ENCODE measurements at regions of chr9 and their contacts with region 1.

Region 1: DNA sequence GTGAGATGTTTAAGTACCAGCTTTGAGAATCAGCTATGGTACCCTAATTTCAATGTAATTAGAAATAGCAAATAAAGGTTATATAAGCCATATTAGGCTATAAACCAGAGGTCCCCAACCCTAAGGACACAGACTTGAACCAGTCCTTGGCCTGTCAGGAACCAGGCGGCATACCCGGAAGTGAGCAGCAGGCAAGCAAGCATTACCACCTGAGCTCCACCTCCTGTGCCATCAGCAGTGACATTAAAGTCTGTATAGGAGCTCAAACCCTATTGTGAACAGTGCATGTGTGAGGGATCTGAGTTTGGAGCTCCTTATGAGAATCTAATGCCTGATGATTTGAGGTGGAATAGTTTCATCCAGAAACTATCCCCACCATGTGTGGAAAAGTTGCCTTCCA is 1009.5 kb downstream of the PTPRD start:
- DNase-seq: no peak
- ATAC-seq: no peak
- H3K4me3 ChIP-seq: no peak overlapping the region
- H3K27ac ChIP-seq: no peak overlapping the region
- H3K4me1 ChIP-seq: no peaks in the 10 kb centered on the region
- H3K27me3 ChIP-seq: no peaks in the 10 kb centered on the region
- CTCF ChIP-seq: no peak

Region 2: GRCh38 chr9:9002826-9003583 is 600.3 kb before region 1 on chr9:
- intact Hi-C with region 1: no loop called
- DNase-seq: no peak
- ATAC-seq: peak in 1 of 4 donors; percentile 30
- H3K4me3 ChIP-seq: no peak overlapping the region
- H3K27ac ChIP-seq: no peak overlapping the region
- H3K4me1 ChIP-seq: no peaks in the 10 kb centered on the region
- H3K27me3 ChIP-seq: no peaks in the 10 kb centered on the region
- CTCF ChIP-seq: no peak

Region 3: DNA sequence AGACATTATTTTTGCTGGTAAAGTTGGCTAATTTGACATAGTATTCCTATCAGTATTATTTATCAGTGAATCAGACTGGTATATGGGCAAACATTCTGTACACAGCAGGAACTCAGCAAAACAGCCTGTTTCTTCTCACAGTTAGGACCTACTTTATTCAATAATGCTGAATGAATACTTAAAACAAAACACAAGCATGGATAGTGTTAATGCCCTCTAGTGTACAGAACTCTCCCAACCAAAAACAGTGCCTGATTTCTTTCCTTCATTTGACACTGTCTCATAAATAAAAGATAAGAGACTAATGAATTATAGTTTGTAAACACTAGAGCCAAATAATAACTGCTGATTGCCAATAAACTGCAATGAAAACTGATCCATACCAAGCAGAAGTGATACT is 103.8 kb before region 1 on chr9:
- intact Hi-C with region 1: no loop called
- DNase-seq: no peak
- ATAC-seq: no peak
- H3K4me3 ChIP-seq: no peak overlapping the region
- H3K27ac ChIP-seq: no peak overlapping the region
- H3K4me1 ChIP-seq: no peaks in the 10 kb centered on the region
- H3K27me3 ChIP-seq: no peaks in the 10 kb centered on the region
- CTCF ChIP-seq: no peak

Region 4: GRCh38 chr9:9790216-9790872 is 187.0 kb after region 1 on chr9:
- intact Hi-C with region 1: loop called in 1 of 3 experiments (anchors 10 kb)
- DNase-seq: peak in 1 of 6 donors; percentile 33
- ATAC-seq: peak; percentile 38 to 75 (median 68)
- H3K4me3 ChIP-seq: no peak overlapping the region
- H3K27ac ChIP-seq: no peak overlapping the region
- H3K4me1 ChIP-seq: no peaks in the 10 kb centered on the region
- H3K27me3 ChIP-seq: no peaks in the 10 kb centered on the region
- CTCF ChIP-seq: peak; percentile 9 to 61 (median 50)

Measured in pancreas (tissue), 10 donors.